ENCODE measurements at regions of chr3 and their contacts with region 1.

Region 1: DNA sequence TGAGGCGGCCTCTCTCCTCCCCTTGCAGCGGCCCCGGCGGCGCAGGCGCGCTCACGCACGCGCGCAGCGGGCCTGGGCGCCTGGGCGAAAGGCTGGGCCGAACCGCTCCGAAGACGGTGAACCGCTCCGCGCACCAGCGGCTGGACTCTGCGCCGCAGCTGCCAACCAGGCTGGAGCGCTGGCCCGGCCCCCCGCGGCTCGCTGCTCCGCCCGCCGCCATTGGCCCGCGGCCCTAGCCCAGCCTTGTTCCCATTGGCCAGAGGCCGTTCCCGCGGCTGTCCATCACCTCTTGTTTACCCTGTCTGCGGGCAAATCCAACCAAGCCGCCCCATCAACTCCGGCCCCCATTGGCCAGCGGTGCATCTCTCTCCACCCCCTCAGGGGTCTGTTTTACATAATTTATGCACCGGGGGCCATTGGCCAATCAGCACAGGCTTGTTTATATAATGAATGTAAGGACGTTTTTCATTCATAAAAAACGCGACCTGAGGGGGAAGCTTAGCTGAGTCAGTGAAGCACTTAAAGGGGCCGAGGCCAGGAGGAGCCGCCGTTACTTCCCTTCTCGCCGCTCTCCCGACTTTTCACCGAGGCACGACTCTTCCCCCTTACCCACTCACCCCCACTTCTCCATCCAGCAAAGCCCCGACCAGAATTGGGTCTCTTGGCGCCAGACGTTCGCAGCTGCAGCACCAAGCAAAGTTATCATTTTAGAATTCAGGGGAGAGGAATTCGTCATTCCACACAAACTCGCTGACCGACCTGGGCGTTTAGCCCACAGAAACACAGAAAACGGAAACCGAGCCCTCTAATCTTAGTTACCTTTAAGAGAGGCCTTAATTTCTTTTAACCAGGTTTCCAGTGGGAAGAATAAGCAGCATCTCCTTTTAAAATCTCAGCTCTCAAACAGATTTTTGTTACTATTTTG is at the start of gene ETV5:
- DNase-seq: peak; percentile 97
- ATAC-seq: peak; percentile 95
- H3K4me3 ChIP-seq: peak within 1 kb of the TSS; percentile 91 to 95
- H3K27ac ChIP-seq: peak within 1 kb of the TSS; percentile 81
- H3K4me1 ChIP-seq: peaks cover 28% of the 10 kb centered on the region
- H3K27me3 ChIP-seq: 0 out of 2 replicates have a peak, but pooled peaks cover 2% of the 10 kb centered on the region
- CTCF ChIP-seq: no peak
- total RNA-seq, gene ETV5: 79.3 TPM

Region 2: GRCh38 chr3:185852635-185853034 is 256.6 kb before region 1 on chr3:
- CTCF ChIA-PET with region 1: no interaction called
- POLR2A ChIA-PET with region 1: no interaction called
- in situ Hi-C with region 1: no loop called
- intact Hi-C with region 1: no loop called
- DNase-seq: no peak
- ATAC-seq: no peak
- H3K4me3 ChIP-seq: no peak overlapping the region
- H3K27ac ChIP-seq: no peak overlapping the region
- H3K4me1 ChIP-seq: no peaks in the 10 kb centered on the region
- H3K27me3 ChIP-seq: no peaks in the 10 kb centered on the region
- CTCF ChIP-seq: no peak

Region 3: DNA sequence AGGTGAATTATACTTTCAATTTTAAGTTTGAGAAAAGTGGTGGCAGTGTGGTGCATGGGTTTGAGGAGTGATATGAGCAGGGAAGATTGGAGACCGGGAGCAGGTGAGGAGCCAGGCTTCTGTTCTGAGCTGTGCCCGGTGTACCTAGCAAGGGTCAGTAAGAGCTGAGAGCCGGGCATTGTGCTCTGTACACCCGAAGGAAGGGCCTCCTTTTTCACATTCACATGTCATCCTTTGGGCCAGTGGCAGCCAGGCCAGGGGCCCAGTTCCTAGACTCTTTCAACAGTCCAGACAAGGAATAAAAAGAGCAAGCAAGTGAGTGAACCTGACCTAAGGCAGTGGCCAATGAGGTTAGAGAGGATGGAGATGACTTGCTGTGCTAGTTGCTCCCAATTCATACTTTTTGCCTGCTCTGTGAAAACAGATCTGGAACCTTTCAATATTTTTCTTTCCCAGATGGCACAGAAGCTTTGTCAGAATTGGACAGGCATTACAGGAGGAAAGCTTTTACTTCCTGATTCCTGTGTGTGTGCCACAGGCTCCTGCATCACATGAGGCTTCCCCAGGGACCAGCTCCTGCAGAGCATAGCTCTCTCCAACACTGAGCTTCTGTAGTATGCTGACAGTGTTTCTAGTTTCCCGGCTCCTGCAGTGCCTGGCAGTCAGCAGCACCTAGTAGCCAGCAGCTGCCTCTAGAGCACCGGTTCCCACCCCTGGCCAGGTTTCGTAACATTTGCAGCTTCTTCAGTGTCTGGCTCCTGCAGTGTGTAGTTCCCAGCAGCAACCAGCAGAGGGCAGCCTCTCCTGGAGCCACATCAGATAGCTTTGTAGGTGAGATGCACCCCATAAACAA is 166.1 kb before region 1 on chr3:
- CTCF ChIA-PET with region 1: interaction called, 10 read pairs
- POLR2A ChIA-PET with region 1: no interaction called
- in situ Hi-C with region 1: no loop called
- intact Hi-C with region 1: no loop called
- DNase-seq: peak; percentile 70
- ATAC-seq: peak; percentile 84
- H3K4me3 ChIP-seq: peak overlapping the region in 1 of 2 experiments; percentile 12; a peak in 1 of 4 replicates
- H3K27ac ChIP-seq: no peak overlapping the region
- H3K4me1 ChIP-seq: peaks cover 5% of the 10 kb centered on the region
- H3K27me3 ChIP-seq: no peaks in the 10 kb centered on the region; the same call in 1 of the 2 replicates
- CTCF ChIP-seq: peak; percentile 100

Region 4: GRCh38 chr3:185971579-185971978 is 137.6 kb before region 1 on chr3:
- CTCF ChIA-PET with region 1: no interaction called
- POLR2A ChIA-PET with region 1: no interaction called
- in situ Hi-C with region 1: no loop called
- intact Hi-C with region 1: no loop called
- DNase-seq: no peak
- ATAC-seq: no peak; the same call in 1 of the 2 replicates
- H3K4me3 ChIP-seq: no peak overlapping the region
- H3K27ac ChIP-seq: no peak overlapping the region
- H3K4me1 ChIP-seq: no peaks in the 10 kb centered on the region
- H3K27me3 ChIP-seq: no peaks in the 10 kb centered on the region
- CTCF ChIP-seq: no peak

Region 5: GRCh38 chr3:186073641-186074040 is 35.6 kb before region 1 on chr3:
- CTCF ChIA-PET with region 1: no interaction called
- POLR2A ChIA-PET with region 1: interaction called, 11 read pairs
- in situ Hi-C with region 1: no loop called
- intact Hi-C with region 1: no loop called
- DNase-seq: no peak
- ATAC-seq: no peak
- H3K4me3 ChIP-seq: no peak overlapping the region
- H3K27ac ChIP-seq: no peak overlapping the region
- H3K4me1 ChIP-seq: no peaks in the 10 kb centered on the region
- H3K27me3 ChIP-seq: no peaks in the 10 kb centered on the region
- CTCF ChIP-seq: no peak

Region 6: DNA sequence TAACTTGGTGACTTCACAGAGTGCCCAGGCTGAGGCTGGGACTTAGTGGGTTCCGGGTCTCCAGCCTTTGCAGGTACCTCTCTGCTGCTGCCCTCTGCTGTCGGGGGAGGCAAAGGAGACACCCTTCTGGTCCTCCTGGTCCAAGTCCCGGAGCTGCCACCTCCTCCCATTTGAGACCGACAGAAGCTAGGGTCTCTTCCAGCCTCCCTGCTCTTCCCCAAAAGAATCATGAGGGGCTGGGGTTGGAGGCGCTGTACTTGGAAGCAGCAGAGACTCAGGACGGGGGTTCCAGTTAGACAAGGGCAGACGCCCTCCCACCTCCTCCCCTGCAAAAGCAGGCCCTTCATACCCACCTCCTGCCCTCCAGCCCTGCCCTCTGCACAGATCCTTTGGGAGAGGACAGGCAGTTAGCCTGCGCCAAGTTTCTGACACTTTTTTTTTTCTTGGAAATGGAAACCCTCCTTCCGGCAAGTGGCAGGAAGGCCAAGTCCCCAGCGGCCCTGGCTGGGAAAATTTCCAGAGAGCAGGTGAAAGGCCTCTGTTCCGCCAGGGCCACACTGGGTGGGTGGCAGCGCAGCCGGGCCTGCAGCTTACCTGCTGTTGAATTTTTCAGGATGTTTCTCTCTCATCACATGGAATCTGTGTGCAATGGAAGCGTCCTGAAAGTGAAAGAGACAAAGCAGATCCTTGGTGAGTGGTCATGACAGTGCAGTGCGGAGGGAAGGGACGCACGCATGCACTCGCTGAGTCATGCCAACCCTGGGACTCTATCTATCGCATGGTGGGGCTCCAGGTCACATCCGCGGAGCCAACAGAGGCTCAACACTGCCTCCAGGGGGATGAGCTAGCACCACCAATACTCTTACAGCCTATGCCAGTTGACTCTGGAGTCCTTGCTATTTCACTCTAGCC is 133.0 kb after region 1 on chr3:
- CTCF ChIA-PET with region 1: no interaction called
- POLR2A ChIA-PET with region 1: no interaction called
- in situ Hi-C with region 1: no loop called
- intact Hi-C with region 1: loop called (anchors 5 kb)
- DNase-seq: no peak
- ATAC-seq: peak; percentile 94
- H3K4me3 ChIP-seq: peak overlapping the region; percentile 5 to 15; a peak in 3 of 4 replicates
- H3K27ac ChIP-seq: no peak overlapping the region
- H3K4me1 ChIP-seq: peaks cover 6% of the 10 kb centered on the region; the same call in 1 of the 2 replicates
- H3K27me3 ChIP-seq: 0 out of 2 replicates have a peak, but pooled peaks cover 2% of the 10 kb centered on the region
- CTCF ChIP-seq: peak; percentile 82